ENCODE measurements at regions of chr21 and their contacts with region 1.

Region 1: GRCh38 chr21:33127154-33127893 is 57.4 kb downstream of the OLIG1 start:
- DNase-seq: peak; percentile 80
- H3K4me3 Mint-ChIP-seq: peak overlapping the region; percentile 64
- H3K27ac Mint-ChIP-seq: no peak overlapping the region
- H3K4me1 Mint-ChIP-seq: no peaks in the 10 kb centered on the region
- H3K27me3 Mint-ChIP-seq: peaks cover 65% of the 10 kb centered on the region
- CTCF ChIP-seq: peak; percentile 72

Region 2: GRCh38 chr21:32834916-32835235 is 292.4 kb before region 1 on chr21:
- CTCF ChIA-PET with region 1: interaction called, 16 read pairs
- POLR2A ChIA-PET with region 1: interaction called, 3 read pairs
- intact Hi-C with region 1: loop called (anchors 2 kb)
- DNase-seq: no peak
- H3K4me3 Mint-ChIP-seq: no peak overlapping the region
- H3K27ac Mint-ChIP-seq: no peak overlapping the region
- H3K4me1 Mint-ChIP-seq: no peaks in the 10 kb centered on the region
- H3K27me3 Mint-ChIP-seq: peaks cover 29% of the 10 kb centered on the region
- CTCF ChIP-seq: no peak

Region 3: GRCh38 chr21:32940079-32941014 is 187.0 kb before region 1 on chr21:
- CTCF ChIA-PET with region 1: interaction called, 21 read pairs
- POLR2A ChIA-PET with region 1: no interaction called
- intact Hi-C with region 1: loop called (anchors 1 kb)
- DNase-seq: peak; percentile 67
- H3K4me3 Mint-ChIP-seq: no peak overlapping the region
- H3K27ac Mint-ChIP-seq: no peak overlapping the region
- H3K4me1 Mint-ChIP-seq: no peaks in the 10 kb centered on the region
- H3K27me3 Mint-ChIP-seq: peaks cover 50% of the 10 kb centered on the region
- CTCF ChIP-seq: peak; percentile 55

Region 4: DNA sequence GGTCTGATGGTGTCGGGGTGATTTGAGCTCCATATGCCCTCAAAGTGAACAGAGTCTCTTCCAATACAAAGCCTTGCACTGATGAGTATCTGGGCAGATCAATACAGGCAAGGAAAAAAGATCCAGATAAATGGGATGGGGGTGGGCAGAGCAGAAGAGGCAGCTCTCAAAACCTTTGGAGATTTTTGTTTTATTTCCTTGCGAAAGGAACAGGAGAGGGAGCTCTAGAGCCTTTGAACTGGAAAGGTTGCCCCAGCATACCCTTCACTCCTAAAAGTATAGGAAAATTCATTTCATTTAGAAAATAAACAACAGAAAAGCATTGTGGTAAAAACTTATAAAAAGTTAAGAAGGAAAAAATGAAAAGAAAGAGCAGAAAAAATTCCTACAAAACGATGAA is 133.0 kb before region 1 on chr21:
- CTCF ChIA-PET with region 1: interaction called, 119 read pairs
- POLR2A ChIA-PET with region 1: interaction called, 6 read pairs
- intact Hi-C with region 1: loop called (anchors 1 kb)
- DNase-seq: peak; percentile 40
- H3K4me3 Mint-ChIP-seq: no peak overlapping the region
- H3K27ac Mint-ChIP-seq: no peak overlapping the region
- H3K4me1 Mint-ChIP-seq: peaks cover 7% of the 10 kb centered on the region
- H3K27me3 Mint-ChIP-seq: peaks cover 64% of the 10 kb centered on the region
- CTCF ChIP-seq: peak; percentile 56

Region 5: GRCh38 chr21:33059380-33059841 is 67.9 kb before region 1 on chr21:
- CTCF ChIA-PET with region 1: interaction called, 10 read pairs
- POLR2A ChIA-PET with region 1: no interaction called
- intact Hi-C with region 1: no loop called
- DNase-seq: peak; percentile 81
- H3K4me3 Mint-ChIP-seq: no peak overlapping the region
- H3K27ac Mint-ChIP-seq: no peak overlapping the region
- H3K4me1 Mint-ChIP-seq: peaks cover 25% of the 10 kb centered on the region
- H3K27me3 Mint-ChIP-seq: peaks cover 51% of the 10 kb centered on the region
- CTCF ChIP-seq: no peak

Region 6: GRCh38 chr21:33199516-33200217 is 72.3 kb after region 1 on chr21:
- CTCF ChIA-PET with region 1: interaction called, 7 read pairs
- POLR2A ChIA-PET with region 1: interaction called, 3 read pairs
- intact Hi-C with region 1: loop called (anchors 1 kb)
- DNase-seq: peak; percentile 96
- H3K4me3 Mint-ChIP-seq: no peak overlapping the region
- H3K27ac Mint-ChIP-seq: no peak overlapping the region
- H3K4me1 Mint-ChIP-seq: peaks cover 20% of the 10 kb centered on the region
- H3K27me3 Mint-ChIP-seq: peaks cover 20% of the 10 kb centered on the region
- CTCF ChIP-seq: peak; percentile 76

Region 7: DNA sequence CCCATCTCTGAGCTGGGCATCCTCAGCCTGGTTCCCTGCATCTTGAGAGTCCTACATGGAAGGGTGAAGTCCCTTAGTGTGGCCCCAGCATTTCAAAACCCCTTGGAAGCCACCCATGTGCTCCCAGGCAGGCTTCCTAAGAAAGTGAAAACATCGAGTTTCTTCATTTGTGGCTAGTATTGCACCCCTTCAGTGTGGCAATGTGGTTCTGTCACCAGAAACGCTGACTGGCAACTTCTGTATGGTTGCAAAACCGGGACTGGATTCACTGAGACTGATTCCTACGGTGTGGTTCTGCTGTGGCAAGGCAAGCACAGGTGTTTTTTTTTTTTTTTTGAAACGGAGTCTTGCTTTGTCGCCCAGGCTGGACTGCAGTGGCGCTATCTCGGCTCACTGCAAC is 266.9 kb after region 1 on chr21:
- CTCF ChIA-PET with region 1: no interaction called
- POLR2A ChIA-PET with region 1: no interaction called
- intact Hi-C with region 1: no loop called
- DNase-seq: peak; percentile 94
- H3K4me3 Mint-ChIP-seq: no peak overlapping the region
- H3K27ac Mint-ChIP-seq: no peak overlapping the region
- H3K4me1 Mint-ChIP-seq: peaks cover 25% of the 10 kb centered on the region
- H3K27me3 Mint-ChIP-seq: no peaks in the 10 kb centered on the region
- CTCF ChIP-seq: no peak